ENCODE measurements at regions of chr19 and their contacts with region 1.

Region 1: GRCh38 chr19:12847159-12848139 is 9.1 kb downstream of the MAST1 start:
- DNase-seq: peak; percentile 78
- H3K4me3 ChIP-seq: peak overlapping the region; percentile 1 to 49 (median 34)
- H3K27ac ChIP-seq: no peak overlapping the region
- H3K4me1 ChIP-seq: peaks cover 10% of the 10 kb centered on the region
- H3K27me3 ChIP-seq: no peaks in the 10 kb centered on the region
- CTCF ChIP-seq: peak; percentile 85 to 97

Region 2: GRCh38 chr19:12564016-12564664 is 283.3 kb before region 1 on chr19:
- CTCF ChIA-PET with region 1: no interaction called
- dilution Hi-C with region 1: no loop called
- in situ Hi-C with region 1: no loop called
- intact Hi-C with region 1: loop called (anchors 1 kb)
- DNase-seq: peak; percentile 88
- H3K4me3 ChIP-seq: no peak overlapping the region
- H3K27ac ChIP-seq: no peak overlapping the region
- H3K4me1 ChIP-seq: no peaks in the 10 kb centered on the region
- H3K27me3 ChIP-seq: no peaks in the 10 kb centered on the region
- CTCF ChIP-seq: peak; percentile 96 to 97

Region 3: GRCh38 chr19:12722566-12723380 is 124.7 kb before region 1 on chr19:
- CTCF ChIA-PET with region 1: interaction called, 5 read pairs
- dilution Hi-C with region 1: no loop called
- in situ Hi-C with region 1: no loop called
- intact Hi-C with region 1: loop called (anchors 5 kb)
- DNase-seq: peak; percentile 98
- H3K4me3 ChIP-seq: peak overlapping the region; percentile 79 to 95 (median 81)
- H3K27ac ChIP-seq: peak overlapping the region; percentile 81
- H3K4me1 ChIP-seq: peaks cover 34% of the 10 kb centered on the region
- H3K27me3 ChIP-seq: no peaks in the 10 kb centered on the region
- CTCF ChIP-seq: no peak

Region 4: GRCh38 chr19:12766051-12766521 is 81.4 kb before region 1 on chr19:
- CTCF ChIA-PET with region 1: no interaction called
- dilution Hi-C with region 1: loop called (anchors 5 kb)
- in situ Hi-C with region 1: loop called (anchors 10 kb)
- intact Hi-C with region 1: no loop called
- DNase-seq: peak; percentile 76
- H3K4me3 ChIP-seq: peak overlapping the region in 2 of 3 experiments; percentile 40 to 46
- H3K27ac ChIP-seq: no peak overlapping the region
- H3K4me1 ChIP-seq: no peaks in the 10 kb centered on the region
- H3K27me3 ChIP-seq: no peaks in the 10 kb centered on the region
- CTCF ChIP-seq: peak; percentile 29 to 67

Region 5: GRCh38 chr19:12796146-12797071 is 51.0 kb before region 1 on chr19:
- CTCF ChIA-PET with region 1: no interaction called
- dilution Hi-C with region 1: loop called (anchors 5 kb)
- in situ Hi-C with region 1: no loop called
- intact Hi-C with region 1: loop called (anchors 1 kb)
- DNase-seq: peak; percentile 58
- H3K4me3 ChIP-seq: no peak overlapping the region
- H3K27ac ChIP-seq: no peak overlapping the region
- H3K4me1 ChIP-seq: peaks cover 24% of the 10 kb centered on the region
- H3K27me3 ChIP-seq: no peaks in the 10 kb centered on the region
- CTCF ChIP-seq: peak; percentile 97

Region 6: DNA sequence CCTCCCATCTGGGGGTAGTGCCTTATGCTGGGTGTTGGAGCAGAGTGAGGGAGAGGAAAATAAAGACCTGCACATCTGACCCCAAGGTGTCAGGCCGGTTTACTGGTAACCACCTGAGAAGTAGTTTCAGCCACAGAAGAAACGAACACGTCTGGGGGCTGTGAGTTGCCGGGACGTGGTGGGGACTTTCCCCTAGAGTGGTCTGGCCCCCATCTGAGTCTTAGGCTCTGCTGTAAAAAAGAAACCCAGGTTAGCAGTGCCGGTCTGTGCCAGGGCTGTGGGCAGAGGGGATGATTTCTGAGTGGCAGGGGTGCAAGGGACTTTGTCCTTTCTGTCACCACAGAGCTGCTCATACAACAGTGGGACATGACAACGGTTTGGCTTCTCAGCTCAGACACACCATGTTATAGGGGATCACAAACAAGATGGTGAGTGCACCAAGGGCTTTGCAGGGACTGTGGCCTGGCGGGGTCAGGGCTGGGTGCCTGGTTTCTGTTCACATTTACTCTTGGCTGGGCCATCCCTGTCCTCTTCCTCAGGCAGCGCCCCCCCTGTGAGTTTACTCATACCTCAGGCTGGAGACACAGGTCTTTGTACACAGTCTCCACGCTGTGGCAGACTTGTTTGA is 52.6 kb after region 1 on chr19:
- CTCF ChIA-PET with region 1: no interaction called
- dilution Hi-C with region 1: no loop called
- in situ Hi-C with region 1: no loop called
- intact Hi-C with region 1: no loop called
- DNase-seq: no peak
- H3K4me3 ChIP-seq: no peak overlapping the region
- H3K27ac ChIP-seq: no peak overlapping the region
- H3K4me1 ChIP-seq: no peaks in the 10 kb centered on the region
- H3K27me3 ChIP-seq: no peaks in the 10 kb centered on the region
- CTCF ChIP-seq: no peak